ENCODE measurements at regions of chr1 and their contacts with region 1.

Region 1: GRCh38 chr1:207579436-207579799 is 65.5 kb upstream of the CR1L start:
- DNase-seq: peak; percentile 15 to 64
- ATAC-seq: peak; percentile 98 to 99
- H3K4me3 ChIP-seq: no peak overlapping the region
- H3K27ac ChIP-seq: no peak overlapping the region
- H3K4me1 ChIP-seq: no peaks in the 10 kb centered on the region
- CTCF ChIP-seq: peak; percentile 65
- EP300 ChIP-seq: no peak
- POLR2A ChIP-seq: no peak
- RAD21 ChIP-seq: peak; percentile 58

Region 2: DNA sequence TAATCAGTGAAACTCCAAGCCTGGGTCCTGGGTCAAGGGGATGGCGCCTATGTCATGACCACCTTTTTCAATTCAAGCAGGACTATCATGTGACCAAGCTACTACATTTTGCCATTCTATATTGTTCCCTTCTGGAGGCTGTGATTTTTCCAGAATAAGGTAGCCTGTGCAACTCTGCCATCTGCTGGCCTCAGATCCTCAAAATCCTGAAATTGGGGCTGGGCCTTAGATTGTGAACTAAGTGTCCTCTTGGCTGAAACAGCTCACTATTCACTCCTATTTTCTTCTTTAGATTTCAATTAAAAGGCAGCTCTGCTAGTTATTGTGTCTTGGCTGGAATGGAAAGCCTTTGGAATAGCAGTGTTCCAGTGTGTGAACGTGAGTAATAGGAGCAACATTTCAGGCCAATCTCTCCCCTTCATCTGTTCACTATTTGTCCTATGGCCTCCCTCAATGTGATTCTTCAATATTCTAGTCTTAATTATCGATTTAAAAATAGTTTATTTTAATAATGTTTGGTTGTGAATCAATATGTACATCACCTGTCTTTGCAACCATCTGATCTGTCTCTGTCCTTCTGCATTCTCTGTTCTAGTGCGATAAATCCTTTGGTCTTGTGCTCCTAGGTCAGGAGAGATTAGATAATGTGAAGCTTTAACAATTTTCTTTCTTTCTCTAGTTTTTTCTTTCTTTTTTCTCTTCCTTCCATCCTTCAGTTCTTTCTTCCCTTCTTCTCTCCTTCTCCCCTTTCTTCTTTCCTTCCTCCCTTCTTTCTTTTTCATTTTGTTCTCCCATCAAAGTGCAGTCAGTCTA is 13.7 kb before region 1 on chr1:
- CTCF ChIA-PET with region 1: interaction called, 11 read pairs
- POLR2A ChIA-PET with region 1: no interaction called
- DNase-seq: peak in 1 of 2 experiments; percentile 27
- ATAC-seq: peak; percentile 86 to 92
- H3K4me3 ChIP-seq: no peak overlapping the region
- H3K27ac ChIP-seq: no peak overlapping the region
- H3K4me1 ChIP-seq: no peaks in the 10 kb centered on the region
- CTCF ChIP-seq: peak; percentile 41
- EP300 ChIP-seq: no peak
- POLR2A ChIP-seq: no peak
- RAD21 ChIP-seq: peak; percentile 25 to 41; a peak in 4 of 5 replicates

Measured in A549 (cell line).